Heart left ventricle (tissue), 16 donors: ENCODE measurements at regions of chr20 and their contacts with region 1.

Region 1: GRCh38 chr20:57391074-57391554 is at the start of gene RBM38:
- DNase-seq: peak; percentile 66 to 89 (median 75)
- ATAC-seq: peak; percentile 24 to 77 (median 62)
- H3K4me3 ChIP-seq: peak within 1 kb of the TSS; percentile 63 to 94 (median 75)
- H3K27ac ChIP-seq: peak within 1 kb of the TSS; percentile 80 to 97 (median 90)
- H3K4me1 ChIP-seq: peaks cover 10 to 70% (median 51%) of the 10 kb centered on the region in 12 donors
- H3K27me3 ChIP-seq: no peaks in the 10 kb centered on the region
- CTCF ChIP-seq: no peak
- POLR2A ChIP-seq: no peak
- total RNA-seq, gene RBM38: 45.6 to 97.9 (median 62.3) TPM

Region 2: GRCh38 chr20:57540890-57541580 is 149.9 kb after region 1 on chr20:
- intact Hi-C with region 1: no loop called
- DNase-seq: no peak
- ATAC-seq: no peak
- H3K4me3 ChIP-seq: no peak overlapping the region
- H3K27ac ChIP-seq: no peak overlapping the region
- H3K4me1 ChIP-seq: no peaks in the 10 kb centered on the region
- H3K27me3 ChIP-seq: peaks cover 0 to 12% (median 0%) of the 10 kb centered on the region in 9 donors
- CTCF ChIP-seq: no peak
- POLR2A ChIP-seq: no peak

Region 3: DNA sequence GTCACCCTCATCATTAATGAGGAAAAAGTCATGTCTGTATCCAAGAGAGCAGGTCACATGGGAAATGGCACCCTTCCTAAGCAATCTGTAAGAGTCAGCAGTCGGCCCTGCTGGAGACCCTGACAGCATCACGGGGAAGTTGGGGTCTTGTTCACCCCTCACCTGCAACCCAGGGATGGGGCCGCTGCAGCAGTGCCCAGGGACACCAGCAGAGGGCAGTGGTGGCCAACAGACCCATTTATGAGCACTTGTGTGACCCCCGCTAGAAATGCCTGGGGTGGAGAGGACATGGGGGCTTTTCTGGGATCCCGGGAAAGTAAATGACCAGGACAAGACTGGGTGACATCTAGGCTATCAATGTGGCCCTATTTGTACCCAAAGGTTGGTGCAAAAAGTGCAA is 801.5 kb after region 1 on chr20:
- intact Hi-C with region 1: no loop called
- DNase-seq: no peak
- ATAC-seq: no peak
- H3K4me3 ChIP-seq: no peak overlapping the region
- H3K27ac ChIP-seq: no peak overlapping the region
- H3K4me1 ChIP-seq: no peaks in the 10 kb centered on the region
- H3K27me3 ChIP-seq: peaks cover 0 to 10% (median 0%) of the 10 kb centered on the region in 9 donors
- CTCF ChIP-seq: peak; percentile 28 to 58 (median 48)
- POLR2A ChIP-seq: no peak

Region 4: DNA sequence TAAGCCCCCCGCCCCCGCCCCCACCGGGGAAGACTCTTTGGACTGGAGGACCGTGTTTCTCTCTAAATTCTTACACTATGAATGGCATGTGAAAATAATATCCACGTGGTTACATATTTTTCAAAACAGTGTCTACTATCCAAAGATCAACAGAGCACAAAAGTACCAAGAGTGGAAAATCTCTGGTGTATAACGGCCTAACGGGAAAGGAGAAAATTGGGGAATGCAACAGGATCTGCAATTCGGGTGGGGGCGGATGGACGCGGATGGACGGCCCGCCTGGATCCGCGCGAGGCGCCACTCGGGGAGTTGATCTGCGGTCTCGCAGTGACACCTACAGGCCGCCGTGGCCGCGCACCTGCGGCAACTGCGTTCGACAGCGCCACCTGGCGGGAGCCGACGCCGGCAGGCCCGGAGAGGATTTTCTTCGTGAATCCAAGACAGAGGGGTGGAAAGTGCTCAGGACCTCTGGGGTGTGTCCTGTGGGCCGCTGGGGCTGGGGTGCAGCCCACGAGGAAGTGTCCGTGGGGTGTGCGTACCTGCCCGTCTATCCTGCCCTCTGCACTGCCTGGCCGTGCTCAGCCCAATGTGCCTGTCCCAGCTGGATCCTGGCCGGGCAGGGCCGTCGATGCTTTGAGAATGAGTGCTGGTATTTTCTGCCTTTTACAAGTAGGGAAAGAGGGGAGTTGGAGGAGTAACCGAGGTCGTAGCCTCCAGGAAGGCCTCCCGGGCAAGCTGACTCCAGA is 818.7 kb after region 1 on chr20:
- intact Hi-C with region 1: loop called in 3 of 10 experiments (anchors 10 kb)
- DNase-seq: peak; percentile 77 to 93 (median 85)
- ATAC-seq: peak; percentile 51 to 92 (median 86)
- H3K4me3 ChIP-seq: no peak overlapping the region
- H3K27ac ChIP-seq: no peak overlapping the region
- H3K4me1 ChIP-seq: peaks cover 0 to 6% (median 0%) of the 10 kb centered on the region in 12 donors
- H3K27me3 ChIP-seq: peaks cover 0 to 24% (median 7%) of the 10 kb centered on the region in 9 donors
- CTCF ChIP-seq: peak; percentile 100
- POLR2A ChIP-seq: no peak